Endothelial cell of umbilical vein (primary cell): ENCODE measurements at regions of chr3 and their contacts with region 1.

Region 1: GRCh38 chr3:168040607-168041208 is 55.0 kb downstream of the GOLIM4 start:
- DNase-seq: peak; percentile 37
- H3K4me3 ChIP-seq: no peak overlapping the region
- H3K27ac ChIP-seq: no peak overlapping the region
- H3K4me1 ChIP-seq: peaks cover 6% of the 10 kb centered on the region
- H3K27me3 ChIP-seq: no peaks in the 10 kb centered on the region
- CTCF ChIP-seq: peak; percentile 51 to 63
- POLR2A ChIP-seq: no peak

Region 2: DNA sequence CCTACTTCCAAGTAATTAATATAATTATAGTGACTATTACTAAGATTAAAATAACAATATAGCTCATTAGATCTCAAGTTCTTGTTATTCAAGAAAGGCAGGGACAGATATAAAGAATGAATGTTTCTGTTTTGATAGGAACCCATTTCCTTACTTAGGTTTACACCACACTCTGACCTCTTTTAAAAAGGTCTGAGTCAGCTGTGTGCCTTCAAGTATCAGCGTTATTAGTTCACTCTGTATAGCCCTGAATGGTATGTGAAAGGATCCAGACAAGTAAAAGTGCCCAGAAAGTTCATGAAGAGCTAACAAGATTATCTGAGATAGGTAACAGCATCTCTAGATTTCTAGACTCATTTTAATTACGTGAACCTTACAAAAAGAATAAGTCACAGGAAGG is 334.9 kb before region 1 on chr3:
- CTCF ChIA-PET with region 1: no interaction called
- POLR2A ChIA-PET with region 1: no interaction called
- dilution Hi-C with region 1: no loop called
- intact Hi-C with region 1: no loop called
- DNase-seq: peak; percentile 34
- H3K4me3 ChIP-seq: no peak overlapping the region
- H3K27ac ChIP-seq: no peak overlapping the region
- H3K4me1 ChIP-seq: peaks cover 5% of the 10 kb centered on the region
- H3K27me3 ChIP-seq: no peaks in the 10 kb centered on the region
- CTCF ChIP-seq: no peak
- POLR2A ChIP-seq: no peak

Region 3: DNA sequence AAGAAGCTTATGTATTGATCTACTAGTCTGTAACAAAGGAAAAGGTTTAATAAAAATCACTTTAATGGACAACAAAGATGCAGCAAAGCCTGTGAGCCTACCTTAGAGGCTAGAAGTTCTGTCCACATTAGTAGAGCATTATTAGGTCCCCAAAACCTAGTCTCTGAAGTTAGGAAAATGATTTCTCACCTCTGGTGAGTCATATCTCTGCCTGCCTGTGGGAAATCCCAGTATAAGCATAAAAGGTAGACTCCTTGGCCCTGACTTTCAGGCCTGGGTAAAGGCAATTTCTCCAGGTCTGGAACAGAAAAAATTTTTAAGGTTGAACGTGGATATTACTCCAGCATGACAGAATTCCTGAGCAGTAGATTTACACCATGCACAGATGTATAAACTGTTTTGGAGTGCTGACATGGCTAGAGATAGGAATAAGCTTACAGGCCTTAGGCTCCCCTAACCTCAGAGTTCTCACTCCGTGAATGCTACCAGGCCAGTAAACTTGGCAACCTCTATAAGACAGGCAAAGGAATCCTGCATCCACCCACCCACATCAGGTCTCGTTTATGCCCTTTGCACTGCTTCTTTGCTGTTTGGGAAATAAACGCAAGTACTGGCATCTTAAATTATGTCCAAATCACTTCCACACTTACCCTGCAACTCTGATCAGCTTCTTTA is 201.1 kb before region 1 on chr3:
- CTCF ChIA-PET with region 1: no interaction called
- POLR2A ChIA-PET with region 1: no interaction called
- dilution Hi-C with region 1: no loop called
- intact Hi-C with region 1: loop called (anchors 2 kb)
- DNase-seq: no peak
- H3K4me3 ChIP-seq: no peak overlapping the region
- H3K27ac ChIP-seq: no peak overlapping the region
- H3K4me1 ChIP-seq: no peaks in the 10 kb centered on the region
- H3K27me3 ChIP-seq: no peaks in the 10 kb centered on the region
- CTCF ChIP-seq: no peak
- POLR2A ChIP-seq: no peak

Region 4: DNA sequence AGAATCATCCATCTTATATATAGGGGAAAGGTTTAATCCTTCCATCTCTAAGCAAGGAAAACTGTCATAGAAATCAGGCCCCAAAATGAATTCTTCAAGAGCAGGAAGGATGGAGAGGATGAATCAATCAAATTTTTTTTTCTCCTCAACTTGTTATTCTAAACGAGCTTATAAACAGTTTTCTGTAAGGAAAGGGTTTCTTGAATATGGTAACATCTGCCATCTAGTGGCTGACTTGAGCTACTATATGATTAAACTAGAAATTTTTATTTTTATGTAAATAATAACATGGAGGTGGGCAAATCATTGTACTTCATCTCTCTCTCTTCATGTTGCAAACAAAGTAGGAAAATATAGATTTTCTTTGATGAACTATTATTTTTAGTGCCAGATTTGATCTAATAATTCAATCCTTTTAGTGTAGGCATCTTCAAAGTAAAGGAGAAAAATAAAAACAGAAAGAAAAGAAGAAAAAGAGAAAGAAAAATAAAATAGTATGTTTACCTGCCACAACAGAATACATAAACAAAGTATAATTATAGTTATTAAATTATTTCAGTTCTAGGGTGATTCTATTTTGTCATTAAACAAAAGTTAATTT is 158.5 kb before region 1 on chr3:
- CTCF ChIA-PET with region 1: interaction called, 10 read pairs
- POLR2A ChIA-PET with region 1: no interaction called
- dilution Hi-C with region 1: no loop called
- intact Hi-C with region 1: no loop called
- DNase-seq: peak; percentile 50
- H3K4me3 ChIP-seq: no peak overlapping the region
- H3K27ac ChIP-seq: no peak overlapping the region
- H3K4me1 ChIP-seq: no peaks in the 10 kb centered on the region
- H3K27me3 ChIP-seq: peaks cover 3 to 11% of the 10 kb centered on the region in 2 experiments
- CTCF ChIP-seq: peak; percentile 27 to 39
- POLR2A ChIP-seq: no peak

Region 5: DNA sequence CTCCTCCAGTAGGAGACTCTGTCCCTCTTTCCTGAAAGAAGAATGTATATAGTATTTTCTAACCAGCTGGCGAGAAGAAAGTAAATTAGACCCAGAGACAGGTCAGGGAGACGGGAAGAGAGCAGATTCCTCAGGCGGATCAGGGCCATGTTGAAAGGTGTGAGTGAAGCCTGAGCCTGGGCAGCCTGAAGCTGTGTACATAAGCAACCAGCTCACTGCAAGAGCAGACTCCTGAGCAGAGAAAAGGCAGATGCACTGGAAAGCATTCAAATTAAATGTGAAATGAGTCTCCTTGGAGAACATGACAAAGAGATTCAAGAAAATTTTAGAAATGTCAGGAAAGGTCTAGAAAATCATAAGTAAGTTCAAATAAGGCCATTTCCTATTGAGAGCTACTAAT is 110.7 kb before region 1 on chr3:
- CTCF ChIA-PET with region 1: interaction called, 104 read pairs
- POLR2A ChIA-PET with region 1: no interaction called
- dilution Hi-C with region 1: no loop called
- intact Hi-C with region 1: loop called (anchors 1 kb)
- DNase-seq: no peak
- H3K4me3 ChIP-seq: no peak overlapping the region
- H3K27ac ChIP-seq: no peak overlapping the region
- H3K4me1 ChIP-seq: no peaks in the 10 kb centered on the region
- H3K27me3 ChIP-seq: peaks cover 0 to 4% of the 10 kb centered on the region in 2 experiments
- CTCF ChIP-seq: no peak
- POLR2A ChIP-seq: no peak

Region 6: DNA sequence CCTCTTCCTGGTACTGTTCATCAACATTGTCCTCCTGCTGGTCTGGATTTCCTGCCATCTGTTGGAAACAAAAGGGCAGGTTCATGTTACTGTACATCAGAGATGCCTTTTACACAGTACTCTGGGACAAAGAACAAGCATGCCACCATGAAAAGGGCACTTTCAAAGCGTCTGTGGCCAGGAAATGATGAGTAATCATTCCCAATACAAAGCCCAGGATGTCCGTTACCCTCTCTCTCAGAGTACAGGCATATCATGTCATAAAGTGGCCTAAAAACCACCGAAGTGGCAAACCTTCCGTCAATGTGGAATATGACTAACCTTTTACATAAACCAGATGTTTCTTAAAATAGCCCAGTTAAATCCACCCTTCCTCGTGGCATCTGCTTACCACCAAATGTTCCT is 16.2 kb before region 1 on chr3:
- CTCF ChIA-PET with region 1: interaction called, 17 read pairs
- POLR2A ChIA-PET with region 1: no interaction called
- dilution Hi-C with region 1: no loop called
- intact Hi-C with region 1: loop called (anchors 2 kb)
- DNase-seq: peak; percentile 79
- H3K4me3 ChIP-seq: no peak overlapping the region
- H3K27ac ChIP-seq: peak overlapping the region; percentile 77
- H3K4me1 ChIP-seq: peaks cover 19% of the 10 kb centered on the region
- H3K27me3 ChIP-seq: no peaks in the 10 kb centered on the region
- CTCF ChIP-seq: no peak
- POLR2A ChIP-seq: no peak

Region 7: DNA sequence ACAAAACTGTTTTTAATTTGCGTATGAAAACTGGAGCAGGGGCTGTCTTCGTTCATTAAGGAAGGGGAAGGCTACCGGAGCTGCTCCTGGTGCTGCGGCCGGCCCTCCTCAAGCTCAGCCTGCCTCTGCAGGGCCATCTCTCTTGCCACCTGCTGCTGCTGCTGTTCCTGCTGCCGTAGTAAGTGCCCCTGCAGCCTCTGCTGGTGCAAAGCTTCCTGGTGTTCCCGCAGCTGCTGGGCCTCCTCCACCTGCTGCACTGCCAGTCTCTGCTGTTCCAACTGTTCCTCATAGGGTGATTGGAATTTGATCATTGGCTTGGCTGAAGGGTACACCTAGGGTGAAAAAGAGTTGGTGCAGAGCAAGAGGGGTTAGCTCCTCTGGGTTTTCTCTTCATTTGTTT is 11.0 kb before region 1 on chr3:
- CTCF ChIA-PET with region 1: interaction called, 17 read pairs
- POLR2A ChIA-PET with region 1: no interaction called
- dilution Hi-C with region 1: no loop called
- intact Hi-C with region 1: loop called (anchors 2 kb)
- DNase-seq: no peak
- H3K4me3 ChIP-seq: no peak overlapping the region
- H3K27ac ChIP-seq: no peak overlapping the region
- H3K4me1 ChIP-seq: peaks cover 11% of the 10 kb centered on the region
- H3K27me3 ChIP-seq: no peaks in the 10 kb centered on the region
- CTCF ChIP-seq: no peak
- POLR2A ChIP-seq: no peak

Region 8: GRCh38 chr3:168071591-168072322 is 31.0 kb after region 1 on chr3:
- CTCF ChIA-PET with region 1: no interaction called
- POLR2A ChIA-PET with region 1: no interaction called
- dilution Hi-C with region 1: no loop called
- intact Hi-C with region 1: no loop called
- DNase-seq: no peak
- H3K4me3 ChIP-seq: no peak overlapping the region
- H3K27ac ChIP-seq: no peak overlapping the region
- H3K4me1 ChIP-seq: no peaks in the 10 kb centered on the region
- H3K27me3 ChIP-seq: no peaks in the 10 kb centered on the region
- CTCF ChIP-seq: no peak
- POLR2A ChIP-seq: no peak